BJ (cell line): ENCODE measurements at regions of chr3 and their contacts with region 1.

Region 1: DNA sequence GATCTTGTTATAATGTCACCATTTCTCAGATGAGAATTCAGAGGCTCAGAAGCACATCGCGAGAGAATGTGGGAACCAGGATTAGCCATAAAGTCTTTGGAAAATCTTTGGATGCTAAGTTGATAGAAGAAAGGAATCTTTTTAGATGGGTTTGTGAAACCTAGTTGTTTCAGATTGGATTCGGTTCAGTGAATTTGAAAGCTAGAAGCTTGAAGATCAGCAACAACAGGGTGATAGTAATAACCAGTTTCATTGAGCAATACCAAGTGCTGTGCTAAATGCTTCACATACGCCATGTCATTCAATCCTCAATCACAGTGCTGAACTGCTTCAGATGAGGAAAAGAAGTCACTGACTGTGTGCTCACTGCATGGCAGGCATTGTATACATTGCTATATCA is 47.4 kb upstream of the MITF start:
- DNase-seq: no peak
- H3K4me3 ChIP-seq: no peak overlapping the region
- H3K27me3 ChIP-seq: no peaks in the 10 kb centered on the region
- CTCF ChIP-seq: no peak

Region 2: DNA sequence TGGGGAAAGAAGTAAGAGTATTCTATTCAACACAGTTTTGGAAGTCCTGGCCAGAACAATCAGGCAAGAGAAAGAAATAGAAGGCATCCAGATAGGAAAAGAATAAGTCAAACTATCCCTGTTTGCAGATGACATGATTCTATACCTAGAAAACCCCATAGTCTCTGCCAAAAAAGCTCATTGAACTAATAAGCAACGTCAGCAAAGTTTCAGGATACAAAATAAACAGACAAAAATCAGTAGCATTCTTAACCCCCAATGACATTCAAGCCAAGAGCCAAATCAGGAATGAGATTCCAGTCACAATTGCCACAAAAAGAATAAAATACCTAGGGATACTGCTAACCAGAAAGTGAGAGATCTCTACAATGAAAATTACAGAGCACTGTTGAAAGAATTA is 52.0 kb before region 1 on chr3:
- CTCF ChIA-PET with region 1: no interaction called
- POLR2A ChIA-PET with region 1: no interaction called
- DNase-seq: no peak
- H3K4me3 ChIP-seq: no peak overlapping the region
- H3K27me3 ChIP-seq: no peaks in the 10 kb centered on the region
- CTCF ChIP-seq: no peak

Region 3: GRCh38 chr3:69739204-69740102 is 47.6 kb after region 1 on chr3 and contains the start of gene MITF:
- CTCF ChIA-PET with region 1: interaction called, 10 read pairs
- POLR2A ChIA-PET with region 1: no interaction called
- DNase-seq: no peak
- H3K4me3 ChIP-seq: peak within 1 kb of the TSS; percentile 93
- H3K27me3 ChIP-seq: peaks cover 1% of the 10 kb centered on the region; the same call in 1 of the 2 replicates
- CTCF ChIP-seq: no peak
- polyA plus RNA-seq, gene MITF: 27.9 and 30.9 TPM in 2 replicates

Region 4: DNA sequence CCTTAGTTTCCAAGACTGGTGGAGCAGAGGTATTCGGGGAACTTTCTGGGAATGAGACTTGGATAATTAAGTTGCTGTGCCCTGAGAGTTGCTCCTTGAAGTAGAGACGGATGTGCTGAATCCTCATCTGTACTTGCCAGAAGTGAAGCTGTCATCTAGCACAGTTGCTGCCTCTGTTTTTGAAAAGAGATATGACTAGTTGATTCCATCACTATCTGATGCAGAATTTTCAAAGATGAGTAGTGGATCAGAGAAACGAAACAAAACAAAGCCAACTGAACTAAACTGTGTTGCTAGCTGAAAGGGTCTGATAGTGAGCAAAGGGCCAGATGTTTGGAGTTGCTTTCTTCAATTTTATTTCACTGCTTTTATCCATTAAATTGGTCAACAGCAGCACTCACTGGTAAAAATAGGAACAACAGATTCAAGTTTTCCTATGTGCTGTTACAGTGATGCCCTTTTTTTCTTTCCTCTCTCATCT is 100.1 kb after region 1 on chr3:
- CTCF ChIA-PET with region 1: interaction called, 79 read pairs
- POLR2A ChIA-PET with region 1: no interaction called
- DNase-seq: no peak
- H3K4me3 ChIP-seq: no peak overlapping the region
- H3K27me3 ChIP-seq: no peaks in the 10 kb centered on the region
- CTCF ChIP-seq: peak; percentile 59

Region 5: DNA sequence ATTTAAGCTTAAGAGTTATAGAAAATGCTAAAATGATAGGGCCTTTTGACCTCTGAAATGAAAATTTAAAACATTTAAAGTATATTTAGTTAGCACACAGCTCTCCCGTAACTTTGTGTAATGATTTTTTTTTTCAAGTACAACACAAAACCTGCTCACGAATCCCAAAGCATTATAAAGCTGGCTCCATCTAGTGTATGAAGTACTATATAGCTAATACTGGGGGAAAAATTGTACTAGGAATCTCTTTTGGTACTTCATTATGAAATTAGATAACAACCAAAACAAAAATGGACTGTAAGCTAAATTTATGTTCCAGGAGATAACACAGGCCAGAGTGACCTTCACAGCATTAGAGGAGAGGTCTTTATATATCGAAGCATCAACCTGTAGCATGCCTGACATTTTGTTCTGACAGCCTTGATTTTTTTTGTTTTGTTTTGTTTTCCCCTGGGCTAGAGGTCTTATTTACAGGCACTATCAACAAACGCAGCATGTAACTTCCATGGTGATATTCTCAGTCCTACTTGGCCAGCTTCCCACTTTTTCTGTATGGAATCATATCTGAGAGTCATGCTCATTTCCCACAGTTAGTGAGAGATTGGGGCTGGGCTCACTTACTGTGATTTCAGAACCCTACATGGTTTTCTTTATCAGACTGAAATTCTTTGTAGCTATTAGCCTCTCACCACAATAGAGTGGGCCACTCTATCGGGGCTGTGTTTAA is 163.7 kb after region 1 on chr3:
- CTCF ChIA-PET with region 1: interaction called, 11 read pairs
- POLR2A ChIA-PET with region 1: no interaction called
- DNase-seq: no peak
- H3K4me3 ChIP-seq: no peak overlapping the region
- H3K27me3 ChIP-seq: no peaks in the 10 kb centered on the region
- CTCF ChIP-seq: peak; percentile 57

Region 6: DNA sequence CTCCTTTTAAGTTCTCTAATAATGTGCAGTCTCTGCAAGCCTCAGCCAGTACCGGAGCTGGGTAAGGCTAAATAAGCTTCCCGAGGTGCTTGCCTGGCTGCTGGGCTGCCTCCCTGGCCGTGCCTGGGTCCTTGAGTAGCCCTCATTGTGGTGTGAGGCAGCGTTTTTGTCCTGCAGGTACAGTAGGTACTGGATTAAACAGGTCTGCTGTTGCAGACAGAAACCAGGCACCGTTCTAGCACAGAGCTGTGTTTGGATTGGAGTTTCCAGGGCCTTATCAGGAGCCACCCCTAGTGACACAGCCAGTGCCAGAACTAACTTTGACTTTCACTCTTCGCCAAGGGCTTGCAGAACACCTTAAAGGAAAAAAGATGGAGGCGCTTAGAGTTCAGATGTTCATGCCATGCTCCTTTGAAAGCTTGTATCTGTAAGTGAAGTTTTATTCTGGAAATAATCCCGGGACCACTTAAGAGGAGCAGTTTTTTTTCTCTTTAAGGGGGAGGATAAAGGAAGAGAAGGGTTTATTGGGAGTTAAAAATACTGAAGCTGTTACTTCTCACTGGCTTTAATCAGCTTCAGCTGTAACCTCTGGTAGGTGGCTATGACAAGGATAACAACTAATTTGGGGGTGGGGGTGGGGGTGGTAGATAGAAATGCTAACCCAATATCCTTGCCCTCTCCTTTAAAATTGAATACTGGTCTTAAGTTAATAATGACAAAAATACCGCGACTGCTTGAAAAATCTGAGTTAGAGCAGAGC is 174.2 kb after region 1 on chr3:
- CTCF ChIA-PET with region 1: interaction called, 13 read pairs
- POLR2A ChIA-PET with region 1: no interaction called
- DNase-seq: no peak
- H3K4me3 ChIP-seq: no peak overlapping the region
- H3K27me3 ChIP-seq: no peaks in the 10 kb centered on the region
- CTCF ChIP-seq: no peak

Region 7: GRCh38 chr3:70224337-70224736 is 532.5 kb after region 1 on chr3:
- CTCF ChIA-PET with region 1: no interaction called
- POLR2A ChIA-PET with region 1: no interaction called
- DNase-seq: no peak
- H3K4me3 ChIP-seq: no peak overlapping the region
- H3K27me3 ChIP-seq: no peaks in the 10 kb centered on the region
- CTCF ChIP-seq: no peak